IMR-90 (cell line): ENCODE measurements at regions of chr1 and their contacts with region 1.

Region 1: GRCh38 chr1:216168481-216168990 is 254.7 kb downstream of the USH2A start:
- DNase-seq: no peak
- ATAC-seq: no peak
- H3K4me3 ChIP-seq: no peak overlapping the region
- H3K27ac ChIP-seq: no peak overlapping the region
- H3K4me1 ChIP-seq: no peaks in the 10 kb centered on the region; the same call in 1 of the 2 replicates
- H3K27me3 ChIP-seq: no peaks in the 10 kb centered on the region
- CTCF ChIP-seq: no peak
- POLR2A ChIP-seq: no peak
- RAD21 ChIP-seq: no peak

Region 2: GRCh38 chr1:215891266-215892057 is 277.1 kb before region 1 on chr1:
- CTCF ChIA-PET with region 1: no interaction called
- POLR2A ChIA-PET with region 1: no interaction called
- dilution Hi-C with region 1: no loop called
- in situ Hi-C with region 1: no loop called
- intact Hi-C with region 1: no loop called
- DNase-seq: peak; percentile 53
- ATAC-seq: peak; percentile 54; the same call in 1 of the 2 replicates
- H3K4me3 ChIP-seq: no peak overlapping the region
- H3K27ac ChIP-seq: no peak overlapping the region
- H3K4me1 ChIP-seq: no peaks in the 10 kb centered on the region
- H3K27me3 ChIP-seq: no peaks in the 10 kb centered on the region
- CTCF ChIP-seq: no peak
- POLR2A ChIP-seq: no peak
- RAD21 ChIP-seq: no peak

Region 3: DNA sequence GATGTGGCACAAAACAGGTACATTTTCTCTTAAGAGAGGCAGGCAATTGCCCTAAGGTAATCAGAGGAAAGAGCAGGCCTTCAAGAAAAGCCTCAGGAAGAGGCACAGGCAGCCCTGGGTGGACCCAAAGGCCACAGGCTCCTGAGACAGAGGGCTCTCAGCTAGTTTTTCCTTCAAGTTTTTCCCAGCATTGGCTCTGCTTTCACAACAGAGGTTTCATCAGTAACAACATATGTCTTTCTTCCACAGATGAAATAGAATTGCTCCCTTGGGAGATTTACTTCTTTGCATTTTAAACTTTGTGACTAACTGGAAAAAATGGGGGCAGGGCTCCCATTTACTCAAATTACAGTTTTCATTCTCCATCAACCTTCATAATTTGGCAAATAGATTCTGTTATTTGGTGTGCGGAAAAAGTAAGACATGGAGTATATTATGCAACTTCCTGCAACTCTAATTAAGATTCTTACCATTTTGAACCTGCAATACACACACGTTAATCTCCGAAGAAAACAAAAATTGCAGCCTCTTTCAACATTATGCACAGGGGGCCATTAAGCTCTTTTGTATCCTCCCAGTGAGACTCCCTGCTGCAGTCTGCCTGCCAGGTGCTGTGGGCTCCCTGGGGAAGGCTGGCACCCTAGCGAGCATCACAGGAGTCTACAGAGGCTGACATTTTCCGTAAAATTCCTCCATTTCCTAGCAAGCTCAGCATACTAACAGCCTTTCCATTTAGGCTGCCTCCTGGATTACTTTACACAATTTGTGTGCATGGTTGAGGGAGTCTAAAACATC is 27.6 kb before region 1 on chr1:
- CTCF ChIA-PET with region 1: no interaction called
- POLR2A ChIA-PET with region 1: interaction called, 17 read pairs
- dilution Hi-C with region 1: no loop called
- in situ Hi-C with region 1: no loop called
- intact Hi-C with region 1: no loop called
- DNase-seq: peak; percentile 34
- ATAC-seq: peak; percentile 40
- H3K4me3 ChIP-seq: no peak overlapping the region
- H3K27ac ChIP-seq: peak overlapping the region; percentile 61; the same call in 1 of the 2 replicates
- H3K4me1 ChIP-seq: peaks cover 5% of the 10 kb centered on the region; the same call in 1 of the 2 replicates
- H3K27me3 ChIP-seq: no peaks in the 10 kb centered on the region
- CTCF ChIP-seq: no peak
- POLR2A ChIP-seq: no peak
- RAD21 ChIP-seq: no peak